Heart right ventricle (tissue), 16 donors: ENCODE measurements at regions of chr19 and their contacts with region 1.

Region 1: GRCh38 chr19:11798391-11799330 is at the start of gene ZNF491:
- DNase-seq: peak; percentile 92 to 94
- ATAC-seq: peak; percentile 98 to 100 (median 99)
- H3K4me3 ChIP-seq: peak within 1 kb of the TSS; percentile 56 to 85 (median 78)
- H3K27ac ChIP-seq: peak within 1 kb of the TSS; percentile 48 to 90 (median 82)
- H3K4me1 ChIP-seq: peaks cover 5 to 24% (median 14%) of the 10 kb centered on the region in 9 donors
- H3K27me3 ChIP-seq: no peaks in the 10 kb centered on the region
- CTCF ChIP-seq: peak in 8 of 9 donors; percentile 17 to 59 (median 36)
- total RNA-seq, gene ZNF491: 1.4 to 5.1 (median 2.6) TPM

Region 2: DNA sequence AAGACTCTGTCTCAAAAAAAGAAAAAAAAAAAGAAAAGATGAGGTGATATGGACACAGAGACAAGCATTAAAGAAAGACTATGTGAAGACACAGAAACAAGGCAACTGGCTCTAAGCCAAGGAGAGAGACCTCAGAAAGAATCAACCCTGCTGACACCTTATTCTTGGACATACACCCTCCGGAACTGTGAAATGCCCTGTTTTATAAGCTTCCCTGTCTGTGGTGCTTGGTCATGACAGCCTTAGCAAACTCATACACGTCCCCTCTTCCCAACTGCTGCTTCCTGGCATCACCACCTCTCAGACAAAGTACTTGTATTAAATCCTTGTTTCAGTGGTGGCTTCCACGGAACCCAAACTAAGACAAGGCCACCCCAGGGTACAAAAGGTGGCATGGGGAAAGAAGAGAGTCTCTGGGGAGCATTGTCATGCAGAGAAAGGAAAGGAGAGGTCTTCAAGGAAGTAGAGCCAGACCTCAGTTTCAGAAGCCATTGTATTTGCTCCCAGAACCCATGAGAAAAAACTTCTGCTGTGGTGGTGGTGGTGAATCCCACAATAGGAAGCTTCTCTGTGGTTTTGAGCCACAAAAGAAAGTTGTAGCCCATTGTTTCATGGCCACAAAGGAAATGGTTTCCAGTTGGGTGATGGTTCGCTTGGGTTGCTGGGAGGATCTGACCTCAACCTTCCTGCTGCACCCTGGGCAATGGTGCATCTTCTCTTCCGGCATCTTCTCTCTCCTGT is 519.0 kb before region 1 on chr19:
- intact Hi-C with region 1: no loop called
- DNase-seq: no peak
- ATAC-seq: peak in 2 of 8 donors; percentile 15 to 31
- H3K4me3 ChIP-seq: no peak overlapping the region
- H3K27ac ChIP-seq: peak overlapping the region in 8 of 10 donors; percentile 6 to 77 (median 47)
- H3K4me1 ChIP-seq: peaks cover 0 to 36% (median 18%) of the 10 kb centered on the region in 9 donors
- H3K27me3 ChIP-seq: peaks cover 0 to 38% (median 0%) of the 10 kb centered on the region in 7 donors
- CTCF ChIP-seq: no peak

Region 3: DNA sequence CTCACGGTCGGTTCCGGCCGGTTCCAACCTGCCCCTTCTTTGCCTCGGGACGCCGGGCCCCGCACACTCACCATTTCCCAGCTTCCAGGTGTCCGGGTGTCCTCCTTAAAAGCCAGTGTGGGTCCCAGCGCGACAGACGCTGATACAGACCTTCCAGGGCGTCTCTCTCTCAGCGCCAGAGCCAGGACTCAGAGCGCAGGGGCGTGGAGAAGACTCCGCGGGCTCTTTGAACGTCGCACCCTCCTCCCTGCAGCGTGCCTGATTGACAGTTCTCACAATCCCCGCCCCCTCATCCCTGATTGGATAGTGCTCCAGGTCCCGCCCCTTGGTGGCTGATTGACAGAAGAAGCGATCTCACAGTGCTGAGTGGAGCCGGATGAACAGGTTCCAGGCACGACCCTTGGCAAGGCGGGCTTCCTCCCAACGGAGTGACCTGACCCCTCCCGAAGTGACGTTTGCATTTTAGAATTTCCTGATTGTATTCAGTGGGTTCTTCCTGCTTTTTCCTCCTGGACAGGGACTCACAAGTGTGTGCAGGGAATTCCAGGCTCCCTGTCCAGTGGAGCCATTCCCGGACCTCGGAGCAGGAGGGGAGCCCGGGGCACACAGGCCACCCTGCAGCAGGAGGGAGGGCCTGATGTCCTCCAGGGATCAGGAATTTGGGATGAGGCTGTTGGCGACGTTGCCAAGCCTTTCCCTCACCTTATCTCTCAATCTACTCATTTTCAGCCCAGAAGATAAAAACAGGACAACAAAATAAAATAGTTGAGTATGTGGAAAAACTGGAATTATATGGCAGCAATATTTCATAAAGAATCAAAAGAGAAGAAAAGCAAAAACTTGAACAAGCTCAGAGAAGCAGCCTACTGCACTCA is 59.7 kb before region 1 on chr19 and contains the start of gene ZNF823:
- intact Hi-C with region 1: no loop called
- DNase-seq: peak; percentile 98 to 100
- ATAC-seq: peak; percentile 98 to 100 (median 100)
- H3K4me3 ChIP-seq: peak within 1 kb of the TSS; percentile 82 to 97 (median 92)
- H3K27ac ChIP-seq: peak within 1 kb of the TSS; percentile 78 to 97 (median 93)
- H3K4me1 ChIP-seq: peaks cover 0 to 31% (median 26%) of the 10 kb centered on the region in 9 donors
- H3K27me3 ChIP-seq: no peaks in the 10 kb centered on the region
- CTCF ChIP-seq: peak in 1 of 9 donors; percentile 3
- total RNA-seq, gene ZNF823: 2.2 to 5.7 (median 3.3) TPM

Region 4: DNA sequence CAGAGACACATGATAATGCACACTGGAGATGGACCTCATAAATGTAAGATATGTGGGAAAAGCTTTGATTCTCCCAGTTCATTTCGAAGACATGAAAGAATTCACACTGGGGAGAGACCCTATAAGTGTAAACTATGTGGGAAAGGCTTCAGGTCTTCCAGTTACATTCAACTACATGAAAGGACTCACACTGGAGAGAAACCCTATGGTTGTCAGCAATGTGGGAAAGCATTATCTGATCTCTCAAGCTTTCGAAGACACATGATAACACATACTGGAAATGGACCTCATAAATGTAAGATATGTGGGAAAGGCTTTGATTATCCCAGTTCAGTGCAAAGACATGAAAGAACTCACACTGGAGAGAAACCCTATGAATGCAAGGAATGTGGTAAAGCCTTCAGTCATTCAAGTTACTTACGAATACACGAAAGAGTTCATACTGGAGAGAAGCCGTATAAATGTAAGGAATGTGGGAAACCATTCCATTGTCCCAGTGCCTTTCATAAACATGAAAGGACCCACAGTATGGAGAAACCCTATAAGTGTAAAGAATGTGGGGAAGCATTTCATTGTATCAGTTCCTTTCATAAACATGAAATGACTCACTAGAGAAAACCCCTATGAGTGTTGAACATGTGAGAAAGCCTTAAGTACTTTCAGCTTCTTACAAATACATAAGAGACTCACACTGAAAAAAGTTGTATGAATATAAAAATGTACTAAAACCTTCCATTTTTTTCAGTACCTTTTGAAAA is 17.2 kb before region 1 on chr19:
- intact Hi-C with region 1: no loop called
- DNase-seq: no peak
- ATAC-seq: no peak
- H3K4me3 ChIP-seq: no peak overlapping the region
- H3K27ac ChIP-seq: no peak overlapping the region
- H3K4me1 ChIP-seq: no peaks in the 10 kb centered on the region
- H3K27me3 ChIP-seq: no peaks in the 10 kb centered on the region
- CTCF ChIP-seq: no peak

Region 5: DNA sequence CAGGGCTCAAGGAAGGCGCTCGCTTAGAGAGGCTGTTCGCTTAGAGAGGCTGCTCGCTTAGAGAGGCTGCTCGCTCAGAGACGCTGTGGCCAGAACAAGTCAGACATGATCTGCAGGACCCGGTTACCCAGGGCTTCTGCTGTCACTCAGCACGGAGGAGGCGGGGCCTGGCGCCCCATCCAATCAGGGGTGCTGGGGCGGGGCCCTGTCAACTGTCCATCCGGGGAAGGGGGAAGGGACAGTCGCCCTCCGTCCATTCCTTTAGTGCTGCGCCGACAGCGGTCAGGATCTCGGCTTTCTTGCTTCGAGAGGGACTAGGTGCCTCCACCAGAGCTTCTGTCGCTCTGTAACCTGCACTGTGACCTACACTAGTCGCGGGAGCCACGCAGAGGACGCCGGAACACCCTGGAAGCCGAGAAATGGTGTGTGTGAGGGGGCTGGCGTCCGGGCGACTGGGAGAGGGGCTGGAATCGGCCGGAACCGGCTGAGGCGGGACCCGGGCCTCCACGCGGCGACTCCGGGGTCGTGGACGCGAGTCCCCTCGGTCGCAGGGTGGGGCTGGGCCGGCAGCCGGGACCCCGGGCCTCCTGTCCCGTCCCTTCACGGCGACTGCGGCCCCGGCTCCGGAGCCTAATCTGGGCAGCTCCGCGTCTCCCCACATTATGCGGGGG is 15.5 kb after region 1 on chr19 and contains the start of gene ZNF440:
- intact Hi-C with region 1: loop called in 3 of 10 experiments (anchors 1 to 2 kb)
- DNase-seq: peak; percentile 96 to 97
- ATAC-seq: peak; percentile 100
- H3K4me3 ChIP-seq: peak within 1 kb of the TSS; percentile 68 to 99 (median 86)
- H3K27ac ChIP-seq: peak within 1 kb of the TSS; percentile 65 to 96 (median 94)
- H3K4me1 ChIP-seq: peaks cover 0 to 25% (median 12%) of the 10 kb centered on the region in 9 donors
- H3K27me3 ChIP-seq: no peaks in the 10 kb centered on the region
- CTCF ChIP-seq: no peak
- total RNA-seq, gene ZNF440: 2.9 to 5.5 (median 4.3) TPM

Region 6: DNA sequence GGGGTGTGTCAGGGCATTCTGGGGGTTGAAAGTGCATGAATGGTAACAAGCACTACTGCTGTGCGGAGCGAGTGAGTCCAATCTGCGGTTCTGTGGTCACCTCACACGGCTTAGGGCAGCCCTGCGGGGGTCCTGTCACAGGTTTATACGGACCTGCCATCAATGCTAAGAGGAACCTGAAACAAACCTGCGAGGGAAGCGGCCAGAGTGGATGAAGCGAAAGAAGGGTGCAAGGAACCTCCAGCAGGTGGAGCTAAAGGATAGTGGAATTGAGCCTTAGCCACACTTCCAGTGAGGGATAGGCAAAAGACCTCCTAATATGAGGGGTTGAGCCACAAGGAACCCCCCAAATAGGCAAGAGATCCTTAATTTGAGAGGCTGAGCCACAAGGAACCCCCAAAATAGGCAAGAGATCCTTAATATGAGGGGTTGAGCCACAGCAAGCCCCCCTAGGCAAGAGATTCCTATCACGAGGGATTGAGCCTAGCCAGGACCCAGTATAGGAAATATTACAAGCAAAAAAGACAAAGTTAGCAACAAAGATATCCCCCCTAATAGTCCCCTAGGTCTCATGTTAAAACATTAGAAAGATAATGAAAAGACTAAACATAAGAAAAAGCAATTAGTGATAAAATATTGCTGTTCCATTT is 82.6 kb after region 1 on chr19:
- intact Hi-C with region 1: loop called in 3 of 10 experiments (anchors 5 to 10 kb)
- DNase-seq: peak; percentile 11 to 53
- ATAC-seq: peak; percentile 64 to 86 (median 72)
- H3K4me3 ChIP-seq: no peak overlapping the region
- H3K27ac ChIP-seq: no peak overlapping the region
- H3K4me1 ChIP-seq: peaks cover 0 to 5% (median 0%) of the 10 kb centered on the region in 9 donors
- H3K27me3 ChIP-seq: no peaks in the 10 kb centered on the region
- CTCF ChIP-seq: peak; percentile 41 to 80 (median 72)

Region 7: GRCh38 chr19:11887611-11888531 is 89.2 kb after region 1 on chr19 and contains the start of gene ZNF69:
- intact Hi-C with region 1: loop called in 3 of 10 experiments (anchors 5 to 10 kb)
- DNase-seq: peak; percentile 90 to 91
- ATAC-seq: peak; percentile 95 to 100 (median 99)
- H3K4me3 ChIP-seq: peak within 1 kb of the TSS; percentile 56 to 83 (median 80)
- H3K27ac ChIP-seq: peak within 1 kb of the TSS in 9 of 10 donors; percentile 74 to 90 (median 83)
- H3K4me1 ChIP-seq: peaks cover 3 to 18% (median 12%) of the 10 kb centered on the region in 9 donors
- H3K27me3 ChIP-seq: no peaks in the 10 kb centered on the region
- CTCF ChIP-seq: peak in 4 of 9 donors; percentile 14 to 51 (median 40)
- total RNA-seq, gene ZNF69: 1.6 to 5.1 (median 4.3) TPM

Region 8: GRCh38 chr19:11964858-11965645 is 166.4 kb after region 1 on chr19 and contains the start of gene ZNF763:
- intact Hi-C with region 1: loop called in 1 of 10 experiments (anchors 10 kb)
- DNase-seq: peak; percentile 92 to 95
- ATAC-seq: peak; percentile 96 to 99 (median 99)
- H3K4me3 ChIP-seq: peak within 1 kb of the TSS; percentile 55 to 94 (median 87)
- H3K27ac ChIP-seq: peak within 1 kb of the TSS; percentile 88 to 98 (median 95)
- H3K4me1 ChIP-seq: peaks cover 5 to 25% (median 17%) of the 10 kb centered on the region in 9 donors
- H3K27me3 ChIP-seq: no peaks in the 10 kb centered on the region
- CTCF ChIP-seq: no peak
- total RNA-seq, gene ZNF763: 1.7 to 7.1 (median 4.8) TPM

Region 9: DNA sequence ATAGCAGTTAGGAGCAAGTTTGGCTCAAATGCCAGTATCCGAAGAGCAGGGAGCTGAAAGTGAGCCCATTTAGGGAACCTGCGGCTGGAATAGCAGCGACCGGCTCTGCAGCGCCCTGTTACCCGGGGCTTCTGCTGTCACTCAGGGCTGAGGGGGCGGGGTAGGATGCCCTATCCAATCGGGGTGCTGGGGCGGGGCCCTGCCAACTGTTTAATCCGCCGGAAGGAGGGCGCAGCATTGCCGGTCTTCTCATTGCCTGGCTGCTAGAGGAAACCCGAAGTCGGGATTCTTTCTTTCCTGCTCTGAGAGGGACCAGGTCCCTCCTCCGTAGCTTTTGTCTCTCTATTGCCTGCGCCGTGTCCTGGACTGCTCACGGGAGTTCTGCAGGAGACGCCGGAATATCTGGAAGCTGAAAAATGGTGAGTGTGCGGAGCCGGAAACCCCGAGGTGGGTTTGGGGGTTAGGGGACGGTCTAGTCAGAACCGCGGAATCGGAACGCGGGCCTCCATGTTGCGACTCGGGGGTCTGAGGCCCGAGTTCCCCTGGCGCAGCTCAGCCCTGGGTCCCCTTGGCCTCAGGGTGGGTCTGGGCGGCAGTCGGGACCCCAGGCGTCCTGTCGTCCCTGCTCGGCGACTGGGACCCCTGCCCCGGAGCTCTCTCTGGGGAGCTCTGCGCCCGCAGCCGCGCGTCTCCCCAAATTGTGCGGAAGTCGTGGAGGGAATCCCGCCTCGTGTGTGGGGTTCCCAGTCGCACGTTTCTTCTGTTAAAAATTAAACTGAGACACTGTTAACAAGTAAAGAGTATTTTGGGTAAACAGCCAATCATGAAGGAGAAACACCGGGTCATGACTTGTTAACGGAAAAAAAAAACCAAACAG is 189.0 kb after region 1 on chr19:
- intact Hi-C with region 1: loop called in 9 of 10 experiments (anchors 2 to 10 kb)
- DNase-seq: peak; percentile 96
- ATAC-seq: peak; percentile 98 to 100 (median 100)
- H3K4me3 ChIP-seq: peak overlapping the region; percentile 72 to 98 (median 84)
- H3K27ac ChIP-seq: peak overlapping the region; percentile 12 to 90 (median 87)
- H3K4me1 ChIP-seq: peaks cover 0 to 12% (median 0%) of the 10 kb centered on the region in 9 donors
- H3K27me3 ChIP-seq: no peaks in the 10 kb centered on the region
- CTCF ChIP-seq: peak in 1 of 9 donors; percentile 8

Region 10: GRCh38 chr19:11995174-11995573 is 196.5 kb after region 1 on chr19:
- intact Hi-C with region 1: loop called in 2 of 10 experiments (anchors 5 to 10 kb)
- DNase-seq: no peak
- ATAC-seq: no peak
- H3K4me3 ChIP-seq: no peak overlapping the region
- H3K27ac ChIP-seq: no peak overlapping the region
- H3K4me1 ChIP-seq: peaks cover 0 to 4% (median 0%) of the 10 kb centered on the region in 9 donors
- H3K27me3 ChIP-seq: no peaks in the 10 kb centered on the region
- CTCF ChIP-seq: no peak